T-cell (primary cell): ENCODE measurements at regions of chr2 and their contacts with region 1.

Region 1: DNA sequence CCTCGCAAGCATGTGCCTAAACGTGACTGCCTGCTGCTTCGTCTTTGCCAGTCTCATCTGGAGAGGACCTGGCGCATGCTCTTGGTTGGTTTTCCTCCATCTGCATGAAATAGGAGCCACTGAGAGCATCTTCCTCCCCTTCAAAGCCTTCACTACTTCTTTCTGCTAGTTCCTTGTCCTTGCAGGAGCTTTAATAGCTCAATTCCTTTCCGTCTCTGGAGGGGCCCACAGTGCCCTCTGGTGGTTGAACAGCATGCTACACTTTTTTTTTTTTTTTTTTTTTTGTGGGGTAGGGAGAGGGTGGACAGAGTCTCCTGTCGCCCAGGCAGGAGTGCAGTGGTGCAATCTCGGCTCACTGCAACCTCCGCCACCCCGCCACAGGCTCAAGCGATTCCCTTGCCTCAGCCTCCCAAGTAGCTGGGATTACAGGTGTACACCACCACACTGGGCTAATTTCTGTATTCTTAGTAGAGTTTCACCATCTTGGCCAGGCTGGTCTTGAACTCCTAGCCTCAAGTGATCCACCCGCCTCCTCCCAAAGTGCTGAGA is 59.6 kb downstream of the SP110 start:
- DNase-seq: peak in 33 of 35 experiments; percentile 5 to 69 (median 42)
- ATAC-seq: peak in 3 of 4 experiments; percentile 36 to 64 (median 42)
- H3K4me3 ChIP-seq: no peak overlapping the region
- H3K4me3 Mint-ChIP-seq: peak overlapping the region in 2 of 3 donors; percentile 0 to 38
- H3K27ac ChIP-seq: no peak overlapping the region
- H3K27ac Mint-ChIP-seq: no peak overlapping the region
- H3K4me1 ChIP-seq: peaks cover 0 to 4% of the 10 kb centered on the region in 2 experiments
- H3K4me1 Mint-ChIP-seq: peaks cover 3 to 15% (median 3%) of the 10 kb centered on the region in 3 donors
- H3K27me3 ChIP-seq: no peaks in the 10 kb centered on the region
- H3K27me3 Mint-ChIP-seq: no peaks in the 10 kb centered on the region

Region 2: GRCh38 chr2:229800997-229801754 is 359.0 kb before region 1 on chr2:
- CTCF ChIA-PET with region 1: interaction called in 1 of 2 experiments, 17 read pairs
- POLR2A ChIA-PET with region 1: interaction called in 1 of 2 experiments, 11 read pairs
- DNase-seq: peak; percentile 31 to 87 (median 68)
- ATAC-seq: peak; percentile 60 to 73 (median 66)
- H3K4me3 ChIP-seq: no peak overlapping the region
- H3K4me3 Mint-ChIP-seq: no peak overlapping the region
- H3K27ac ChIP-seq: no peak overlapping the region
- H3K27ac Mint-ChIP-seq: peak overlapping the region in 1 of 2 donors; percentile 17
- H3K4me1 ChIP-seq: no peaks in the 10 kb centered on the region
- H3K4me1 Mint-ChIP-seq: peaks cover 0 to 3% (median 2%) of the 10 kb centered on the region in 3 donors
- H3K27me3 ChIP-seq: no peaks in the 10 kb centered on the region
- H3K27me3 Mint-ChIP-seq: no peaks in the 10 kb centered on the region

Region 3: DNA sequence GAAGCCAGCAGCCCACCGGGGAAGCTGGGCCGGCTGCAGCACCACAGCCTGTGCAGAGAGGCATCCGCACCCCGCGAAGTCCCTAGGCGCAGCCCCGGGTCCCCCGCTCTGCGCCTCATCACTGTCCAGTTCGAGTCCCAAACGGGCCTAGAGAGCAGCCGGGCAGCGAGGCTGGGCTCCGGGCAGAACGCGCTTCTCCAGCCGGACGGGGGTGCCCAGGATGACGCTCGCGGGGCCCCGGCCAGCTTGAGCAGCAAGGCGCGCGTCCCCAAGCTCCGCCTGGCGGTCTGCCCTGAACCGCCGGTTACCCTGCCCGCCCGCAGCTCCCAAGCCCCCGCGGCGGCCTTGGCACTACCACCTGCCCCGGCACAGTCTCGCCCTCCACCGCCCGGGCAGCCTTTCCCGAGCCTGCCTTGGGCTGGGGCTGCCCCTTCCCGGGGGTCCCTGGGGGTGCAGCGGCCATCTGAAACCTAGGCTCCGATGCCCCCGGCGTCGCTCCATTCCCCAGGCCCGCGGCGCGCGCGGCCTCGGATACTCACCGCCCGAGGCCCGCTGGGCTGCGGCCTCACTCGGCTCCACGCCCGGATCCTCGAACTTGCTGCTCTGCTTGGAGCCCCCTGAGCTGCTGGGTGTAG is 92.1 kb before region 1 on chr2:
- CTCF ChIA-PET with region 1: interaction called, 12 to 14 read pairs
- POLR2A ChIA-PET with region 1: interaction called in 1 of 2 experiments, 4 read pairs
- DNase-seq: peak in 26 of 35 experiments; percentile 3 to 51 (median 32)
- ATAC-seq: peak; percentile 38 to 57 (median 54)
- H3K4me3 ChIP-seq: peak overlapping the region; percentile 46 to 60
- H3K4me3 Mint-ChIP-seq: peak overlapping the region; percentile 82 to 87 (median 87)
- H3K27ac ChIP-seq: no peak overlapping the region
- H3K27ac Mint-ChIP-seq: no peak overlapping the region
- H3K4me1 ChIP-seq: peaks cover 0 to 22% of the 10 kb centered on the region in 2 experiments
- H3K4me1 Mint-ChIP-seq: peaks cover 9 to 19% (median 11%) of the 10 kb centered on the region in 3 donors
- H3K27me3 ChIP-seq: peaks cover 0 to 20% of the 10 kb centered on the region in 2 experiments
- H3K27me3 Mint-ChIP-seq: peaks cover 4 to 16% of the 10 kb centered on the region in 2 donors

Region 4: GRCh38 chr2:230106810-230107209 is 53.4 kb before region 1 on chr2:
- CTCF ChIA-PET with region 1: no interaction called
- POLR2A ChIA-PET with region 1: no interaction called
- DNase-seq: no peak
- ATAC-seq: no peak
- H3K4me3 ChIP-seq: no peak overlapping the region
- H3K4me3 Mint-ChIP-seq: no peak overlapping the region
- H3K27ac ChIP-seq: no peak overlapping the region
- H3K27ac Mint-ChIP-seq: no peak overlapping the region
- H3K4me1 ChIP-seq: no peaks in the 10 kb centered on the region
- H3K4me1 Mint-ChIP-seq: no peaks in the 10 kb centered on the region
- H3K27me3 ChIP-seq: no peaks in the 10 kb centered on the region
- H3K27me3 Mint-ChIP-seq: peaks cover 10 to 19% of the 10 kb centered on the region in 2 donors

Region 5: GRCh38 chr2:230128623-230129342 is 31.4 kb before region 1 on chr2:
- CTCF ChIA-PET with region 1: interaction called in 1 of 2 experiments, 4 read pairs
- POLR2A ChIA-PET with region 1: interaction called in 1 of 2 experiments, 12 read pairs
- DNase-seq: no peak
- ATAC-seq: no peak
- H3K4me3 ChIP-seq: no peak overlapping the region
- H3K4me3 Mint-ChIP-seq: no peak overlapping the region
- H3K27ac ChIP-seq: no peak overlapping the region
- H3K27ac Mint-ChIP-seq: no peak overlapping the region
- H3K4me1 ChIP-seq: peaks cover 0 to 7% of the 10 kb centered on the region in 2 experiments
- H3K4me1 Mint-ChIP-seq: peaks cover 13 to 17% (median 16%) of the 10 kb centered on the region in 3 donors
- H3K27me3 ChIP-seq: peaks cover 0 to 2% of the 10 kb centered on the region in 2 experiments
- H3K27me3 Mint-ChIP-seq: peaks cover 0 to 5% of the 10 kb centered on the region in 2 donors

Region 6: GRCh38 chr2:230170532-230170931 is 10.3 kb after region 1 on chr2:
- CTCF ChIA-PET with region 1: interaction called, 4 to 18 read pairs
- POLR2A ChIA-PET with region 1: interaction called in 1 of 2 experiments, 4 read pairs
- DNase-seq: peak in 15 of 35 experiments; percentile 5 to 47 (median 20)
- ATAC-seq: peak in 2 of 4 experiments; percentile 27 to 90
- H3K4me3 ChIP-seq: no peak overlapping the region
- H3K4me3 Mint-ChIP-seq: peak overlapping the region in 1 of 3 donors; percentile 48
- H3K27ac ChIP-seq: peak overlapping the region; percentile 9
- H3K27ac Mint-ChIP-seq: peak overlapping the region; percentile 84 to 85
- H3K4me1 ChIP-seq: peaks cover 3 to 4% of the 10 kb centered on the region in 2 experiments
- H3K4me1 Mint-ChIP-seq: peaks cover 11 to 15% (median 12%) of the 10 kb centered on the region in 3 donors
- H3K27me3 ChIP-seq: no peaks in the 10 kb centered on the region
- H3K27me3 Mint-ChIP-seq: no peaks in the 10 kb centered on the region

Region 7: GRCh38 chr2:230459216-230459615 is 299.0 kb after region 1 on chr2:
- CTCF ChIA-PET with region 1: no interaction called
- POLR2A ChIA-PET with region 1: no interaction called
- DNase-seq: no peak
- ATAC-seq: no peak
- H3K4me3 ChIP-seq: no peak overlapping the region
- H3K4me3 Mint-ChIP-seq: no peak overlapping the region
- H3K27ac ChIP-seq: no peak overlapping the region
- H3K27ac Mint-ChIP-seq: peak overlapping the region; percentile 76 to 78
- H3K4me1 ChIP-seq: peaks cover 11% of the 10 kb centered on the region in 2 experiments
- H3K4me1 Mint-ChIP-seq: peaks cover 50 to 66% (median 57%) of the 10 kb centered on the region in 3 donors
- H3K27me3 ChIP-seq: no peaks in the 10 kb centered on the region
- H3K27me3 Mint-ChIP-seq: no peaks in the 10 kb centered on the region